MCF 10A (cell line): ENCODE measurements at regions of chr12 and their contacts with region 1.

Region 1: DNA sequence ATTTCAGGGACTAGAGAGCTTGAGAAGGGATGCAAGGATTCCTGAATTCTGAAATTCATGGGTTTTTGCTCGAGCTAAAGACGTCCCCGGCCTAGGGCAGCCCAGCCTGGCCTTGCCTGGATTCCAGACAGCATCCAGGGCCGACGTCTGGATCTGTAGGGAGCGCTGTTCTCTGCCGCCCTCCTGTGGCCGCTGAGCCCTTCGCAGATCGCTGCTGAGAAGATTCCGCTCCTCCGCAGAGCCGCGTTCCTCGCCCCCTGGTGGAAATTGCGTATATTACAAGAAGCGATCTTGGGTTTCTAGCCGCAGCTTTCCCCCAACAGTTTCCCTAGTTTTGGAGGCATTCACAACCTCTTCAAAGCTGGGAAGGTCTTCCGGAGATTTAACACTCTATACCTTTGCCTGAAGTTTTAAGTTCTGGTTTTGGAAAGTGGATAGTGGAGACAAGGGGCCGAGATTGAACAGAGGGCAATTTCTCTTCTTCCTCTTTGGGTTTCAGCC is 5.1 kb downstream of the CISTR start:
- DNase-seq: peak; percentile 83
- H3K4me3 Mint-ChIP-seq: no peak overlapping the region
- H3K27ac Mint-ChIP-seq: no peak overlapping the region
- H3K4me1 Mint-ChIP-seq: no peaks in the 10 kb centered on the region
- H3K27me3 Mint-ChIP-seq: no peaks in the 10 kb centered on the region
- CTCF ChIP-seq: peak; percentile 99

Region 2: GRCh38 chr12:53543539-53543938 is 203.1 kb before region 1 on chr12:
- CTCF ChIA-PET with region 1: interaction called, 18 read pairs
- POLR2A ChIA-PET with region 1: interaction called, 3 read pairs
- intact Hi-C with region 1: loop called (anchors 5 kb)
- DNase-seq: peak; percentile 73
- H3K4me3 Mint-ChIP-seq: no peak overlapping the region
- H3K27ac Mint-ChIP-seq: peak overlapping the region; percentile 57
- H3K4me1 Mint-ChIP-seq: peaks cover 19% of the 10 kb centered on the region
- H3K27me3 Mint-ChIP-seq: no peaks in the 10 kb centered on the region
- CTCF ChIP-seq: peak; percentile 76

Region 3: DNA sequence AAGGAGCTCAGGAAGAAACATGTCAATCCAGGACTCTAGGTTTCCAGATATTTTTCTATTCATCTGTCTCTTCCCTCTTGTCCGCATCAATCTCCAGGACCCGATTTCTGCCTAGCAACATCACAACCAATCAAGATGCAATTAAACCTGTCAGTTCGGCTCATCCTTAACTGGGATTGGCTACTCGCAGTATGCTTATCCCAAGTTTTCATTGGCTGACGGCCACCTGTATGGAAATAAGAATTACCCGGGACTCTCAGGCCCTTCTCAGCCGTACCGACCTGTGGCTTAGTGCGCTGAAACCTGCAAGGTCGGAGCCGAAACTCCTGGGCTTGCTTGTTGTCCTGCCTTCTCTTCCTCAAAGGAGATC is 50.4 kb before region 1 on chr12:
- CTCF ChIA-PET with region 1: interaction called, 172 read pairs
- POLR2A ChIA-PET with region 1: no interaction called
- intact Hi-C with region 1: loop called (anchors 1 kb)
- DNase-seq: peak; percentile 93
- H3K4me3 Mint-ChIP-seq: no peak overlapping the region
- H3K27ac Mint-ChIP-seq: no peak overlapping the region
- H3K4me1 Mint-ChIP-seq: no peaks in the 10 kb centered on the region
- H3K27me3 Mint-ChIP-seq: peaks cover 42% of the 10 kb centered on the region
- CTCF ChIP-seq: no peak

Region 4: GRCh38 chr12:53719649-53720048 is 27.0 kb before region 1 on chr12:
- CTCF ChIA-PET with region 1: interaction called, 411 read pairs
- POLR2A ChIA-PET with region 1: interaction called, 4 read pairs
- intact Hi-C with region 1: no loop called
- DNase-seq: no peak
- H3K4me3 Mint-ChIP-seq: no peak overlapping the region
- H3K27ac Mint-ChIP-seq: no peak overlapping the region
- H3K4me1 Mint-ChIP-seq: no peaks in the 10 kb centered on the region
- H3K27me3 Mint-ChIP-seq: no peaks in the 10 kb centered on the region
- CTCF ChIP-seq: no peak

Region 5: DNA sequence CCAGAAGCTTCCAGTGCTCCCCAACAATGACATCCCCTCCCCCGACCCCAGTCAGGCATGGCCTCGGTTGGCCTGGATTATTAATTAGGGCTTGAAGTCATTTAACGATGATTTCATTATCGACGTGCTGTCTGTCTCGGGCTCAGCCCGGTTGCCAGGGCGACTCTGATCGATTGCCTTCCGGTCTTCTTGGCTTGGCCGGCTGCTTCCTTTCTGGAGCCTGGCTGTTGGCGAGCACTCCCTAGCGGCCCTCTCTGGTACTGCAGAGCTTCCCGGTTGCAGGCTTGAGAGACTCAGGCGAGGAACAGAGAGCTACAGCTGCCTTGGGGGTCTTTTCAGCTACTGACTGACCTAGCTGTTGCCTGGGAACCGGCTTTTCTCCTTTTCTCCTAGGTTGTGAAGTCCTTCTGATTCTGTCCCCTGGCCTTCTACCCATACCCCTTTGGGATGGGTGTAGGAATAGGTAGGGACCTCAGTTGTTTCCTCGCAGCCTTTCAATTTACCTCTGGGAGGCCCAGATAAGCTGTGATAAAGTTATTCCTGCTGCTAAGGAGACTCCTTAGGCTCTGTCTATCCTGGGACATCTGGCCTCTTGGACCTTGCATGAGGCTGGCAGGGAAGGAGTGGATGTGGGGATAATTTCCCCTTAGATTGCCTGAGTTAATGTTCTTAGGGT is 10.6 kb after region 1 on chr12:
- CTCF ChIA-PET with region 1: interaction called, 96 read pairs
- POLR2A ChIA-PET with region 1: no interaction called
- intact Hi-C with region 1: no loop called
- DNase-seq: peak; percentile 71
- H3K4me3 Mint-ChIP-seq: no peak overlapping the region
- H3K27ac Mint-ChIP-seq: no peak overlapping the region
- H3K4me1 Mint-ChIP-seq: peaks cover 7% of the 10 kb centered on the region
- H3K27me3 Mint-ChIP-seq: peaks cover 26% of the 10 kb centered on the region
- CTCF ChIP-seq: peak; percentile 83

Region 6: DNA sequence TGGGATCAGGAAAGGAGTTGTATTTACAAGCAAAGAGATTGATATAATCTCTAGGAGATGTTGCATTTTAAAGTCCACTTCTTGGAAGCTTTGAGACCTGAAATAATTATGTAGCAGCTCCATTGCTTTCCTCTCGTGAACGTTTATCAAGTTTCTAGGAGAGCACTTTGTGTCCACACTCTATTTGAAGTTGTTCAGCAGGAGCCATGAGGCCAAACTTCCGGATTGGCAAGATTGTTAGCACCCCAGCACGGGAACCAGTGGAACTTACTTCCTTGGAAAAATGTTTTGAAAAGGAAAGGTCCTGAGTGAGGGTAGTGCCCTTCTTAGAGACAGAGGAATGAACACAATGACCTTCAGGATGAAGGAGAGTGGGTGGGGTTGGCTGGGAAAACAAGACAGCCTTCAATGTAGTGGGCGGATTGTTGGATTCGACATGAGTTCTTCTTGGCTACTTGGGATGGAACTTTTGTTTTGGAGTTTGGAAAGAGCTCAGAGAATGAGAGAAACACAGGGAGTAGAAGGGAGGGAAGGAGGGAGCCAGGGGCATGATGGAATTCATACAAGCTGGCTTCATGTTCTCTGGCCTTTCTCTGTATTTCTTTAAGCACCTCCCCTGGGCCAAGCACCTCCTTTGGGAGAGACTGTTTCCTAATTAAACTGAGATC is 29.0 kb after region 1 on chr12:
- CTCF ChIA-PET with region 1: interaction called, 12 read pairs
- POLR2A ChIA-PET with region 1: no interaction called
- intact Hi-C with region 1: no loop called
- DNase-seq: no peak
- H3K4me3 Mint-ChIP-seq: no peak overlapping the region
- H3K27ac Mint-ChIP-seq: no peak overlapping the region
- H3K4me1 Mint-ChIP-seq: peaks cover 10% of the 10 kb centered on the region
- H3K27me3 Mint-ChIP-seq: no peaks in the 10 kb centered on the region
- CTCF ChIP-seq: no peak

Region 7: DNA sequence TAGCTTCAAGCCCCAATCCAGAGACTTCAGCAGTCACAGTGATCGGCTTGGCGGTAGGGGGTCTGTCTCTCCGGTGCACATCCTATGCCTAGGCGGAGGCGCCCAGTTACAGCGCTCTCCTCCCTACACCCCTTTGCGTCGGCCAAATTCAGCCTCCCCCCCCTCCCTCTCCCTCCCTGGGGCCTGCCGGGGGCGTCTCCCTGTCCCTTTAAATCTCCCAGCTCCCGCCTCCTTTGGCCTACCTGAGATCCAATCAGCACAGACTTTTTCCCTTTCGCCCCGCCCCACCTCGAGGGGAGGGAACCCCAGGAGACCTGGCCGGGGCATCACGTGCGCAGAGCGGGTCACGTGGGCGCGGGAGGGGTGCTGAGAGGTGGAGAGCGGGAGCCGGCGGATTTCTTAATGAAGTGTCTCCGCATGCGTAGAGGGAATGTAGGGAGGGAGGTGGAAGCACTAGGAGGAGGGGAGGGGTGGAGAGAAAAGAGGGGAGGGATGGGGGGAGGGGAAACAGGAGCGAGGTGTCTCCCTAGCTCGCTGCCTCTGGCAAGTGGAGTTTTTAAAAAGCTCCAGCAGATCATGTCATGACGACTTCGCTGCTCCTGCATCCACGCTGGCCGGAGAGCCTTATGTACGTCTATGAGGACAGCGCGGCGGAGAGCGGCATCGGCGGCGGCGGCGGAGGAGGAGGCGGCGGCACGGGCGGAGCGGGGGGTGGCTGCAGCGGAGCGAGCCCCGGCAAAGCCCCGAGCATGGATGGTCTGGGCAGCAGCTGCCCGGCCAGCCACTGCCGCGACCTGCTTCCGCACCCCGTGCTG is 191.9 kb after region 1 on chr12 and contains the start of gene HOXC13:
- CTCF ChIA-PET with region 1: interaction called, 21 read pairs
- POLR2A ChIA-PET with region 1: interaction called, 3 read pairs
- intact Hi-C with region 1: no loop called
- DNase-seq: peak; percentile 100
- H3K4me3 Mint-ChIP-seq: peak within 1 kb of the TSS; percentile 78
- H3K27ac Mint-ChIP-seq: peak within 1 kb of the TSS; percentile 68
- H3K4me1 Mint-ChIP-seq: peaks cover 34% of the 10 kb centered on the region
- H3K27me3 Mint-ChIP-seq: no peaks in the 10 kb centered on the region
- CTCF ChIP-seq: peak; percentile 6
- total RNA-seq, gene HOXC13: 5.3 and 6.0 TPM in 2 replicates